Posterior vena cava (tissue), 2 donors: ENCODE measurements at regions of chr1 and their contacts with region 1.

Region 1: GRCh38 chr1:108125312-108126138 is 74.6 kb downstream of the SLC25A24 start:
- DNase-seq: no peak

Region 2: DNA sequence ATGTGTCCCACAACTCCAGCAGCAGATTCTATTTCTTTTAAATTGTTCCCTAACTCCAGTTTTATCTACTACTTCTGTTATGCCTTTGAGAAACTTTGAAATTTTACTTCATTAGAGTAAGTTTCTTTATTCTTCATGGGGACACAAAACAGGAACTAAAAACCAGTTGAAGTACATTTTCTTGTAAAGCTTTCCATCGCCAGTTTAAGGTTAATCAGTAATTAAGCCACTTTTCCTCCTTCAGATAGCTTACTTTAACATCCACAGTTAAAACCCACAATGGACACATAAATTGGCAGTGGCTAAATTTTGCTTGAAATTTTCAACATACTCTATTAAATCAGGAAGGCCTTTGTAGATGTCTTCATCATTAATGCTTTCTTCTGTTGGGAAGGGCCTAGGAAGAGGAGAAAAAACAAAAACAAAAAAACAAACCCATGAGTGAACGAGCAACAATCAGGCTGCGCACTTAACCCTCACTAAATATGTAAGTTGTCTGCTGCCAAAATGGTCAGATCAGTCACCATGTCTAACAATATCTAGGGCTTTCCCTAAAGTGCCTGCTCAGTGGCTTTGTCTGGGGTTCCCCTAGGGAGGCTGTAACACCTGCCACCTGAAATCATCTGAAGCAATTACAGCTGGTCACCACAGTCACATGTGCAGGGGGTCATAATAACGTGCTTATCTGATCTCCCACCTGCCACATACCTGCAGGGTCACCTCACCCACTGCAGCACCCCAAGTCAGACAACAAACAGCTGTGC is 348.4 kb before region 1 on chr1:
- intact Hi-C with region 1: loop called (anchors 5 kb)
- DNase-seq: no peak

Region 3: GRCh38 chr1:107782217-107782845 is 343.2 kb before region 1 on chr1:
- intact Hi-C with region 1: loop called (anchors 5 kb)
- DNase-seq: no peak

Region 4: DNA sequence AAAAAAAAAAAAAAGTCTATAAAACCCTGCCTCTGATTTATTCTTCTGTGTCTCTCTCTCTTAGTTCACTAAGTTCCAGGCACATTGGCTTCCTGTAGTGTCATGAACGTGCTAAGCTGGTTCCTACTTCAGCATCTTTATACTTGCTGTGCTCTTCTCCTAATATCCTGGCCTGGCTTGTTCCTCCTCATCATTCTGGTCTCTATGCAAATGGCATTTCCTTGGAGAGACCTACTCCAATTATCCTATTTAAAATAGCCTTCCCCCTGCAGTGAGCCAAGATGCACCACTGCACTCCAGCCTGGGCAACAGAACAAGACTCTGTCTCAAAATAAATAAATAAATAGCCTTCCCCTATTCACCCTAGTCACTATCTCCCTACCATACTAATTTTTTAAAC is 847.4 kb after region 1 on chr1:
- intact Hi-C with region 1: no loop called
- DNase-seq: no peak